IMR-90 (cell line): ENCODE measurements at regions of chr12 and their contacts with region 1.

Region 1: DNA sequence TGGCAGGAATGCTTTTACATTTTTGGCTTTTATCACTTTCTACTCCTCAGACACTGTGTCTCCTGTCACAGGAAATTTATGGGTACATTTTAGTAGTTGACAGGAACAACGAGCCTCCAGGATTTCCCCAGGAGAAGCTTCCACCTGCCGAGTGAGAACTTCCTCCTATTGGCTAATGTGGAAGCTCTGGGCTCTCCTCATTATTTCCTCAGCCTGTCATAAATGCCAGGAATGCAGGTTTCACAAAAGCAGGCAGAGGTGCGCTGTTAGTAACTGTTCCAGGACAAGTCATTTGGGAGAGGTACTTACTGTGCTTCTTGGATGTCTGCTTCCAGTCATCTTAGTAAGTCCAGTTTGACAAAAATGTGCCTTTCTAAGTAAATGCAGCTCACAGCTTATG is 19.1 kb upstream of the DCP1B start:
- DNase-seq: no peak
- ATAC-seq: no peak
- H3K4me3 ChIP-seq: no peak overlapping the region
- H3K27ac ChIP-seq: no peak overlapping the region
- H3K4me1 ChIP-seq: no peaks in the 10 kb centered on the region
- H3K27me3 ChIP-seq: peaks cover 38% of the 10 kb centered on the region
- CTCF ChIP-seq: no peak
- POLR2A ChIP-seq: no peak
- RAD21 ChIP-seq: no peak

Region 2: DNA sequence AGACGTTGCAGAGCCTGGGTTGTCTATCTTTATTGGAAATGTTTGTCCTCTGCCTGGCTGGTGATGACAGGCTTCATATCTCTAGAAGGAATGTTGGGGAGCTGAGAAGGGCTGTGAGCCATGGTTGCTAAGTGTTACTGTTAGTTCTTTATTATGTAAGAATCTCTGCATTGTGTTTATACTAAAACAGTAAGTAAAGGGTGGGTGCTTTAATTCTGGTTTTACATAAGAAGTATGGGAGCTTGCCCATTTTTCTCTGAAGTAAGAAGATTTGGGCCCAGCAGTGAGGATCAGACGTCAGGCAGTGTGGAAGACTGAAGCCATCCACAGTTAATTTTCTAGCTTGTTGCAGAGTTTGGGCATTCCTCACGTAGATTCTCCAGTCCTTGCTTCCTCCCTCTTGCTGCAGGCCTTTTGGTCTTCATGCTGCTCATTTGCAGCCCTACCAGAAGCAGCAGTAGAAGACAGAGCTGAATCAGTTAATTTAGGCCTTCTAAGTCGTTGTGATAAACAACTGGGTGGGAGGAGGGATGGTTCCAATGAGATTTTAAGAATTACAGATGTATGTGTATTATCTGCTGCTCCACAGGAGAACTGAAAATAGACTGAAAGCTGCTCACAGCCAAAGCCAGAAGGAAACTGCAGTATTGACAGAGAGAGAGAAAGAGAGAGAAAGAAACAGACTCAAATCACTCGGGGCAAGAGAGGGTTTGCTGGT is 372.9 kb before region 1 on chr12:
- CTCF ChIA-PET with region 1: no interaction called
- POLR2A ChIA-PET with region 1: no interaction called
- dilution Hi-C with region 1: no loop called
- in situ Hi-C with region 1: loop called (anchors 10 kb)
- intact Hi-C with region 1: no loop called
- DNase-seq: peak; percentile 20
- ATAC-seq: peak; percentile 45; the same call in 1 of the 2 replicates
- H3K4me3 ChIP-seq: no peak overlapping the region
- H3K27ac ChIP-seq: no peak overlapping the region
- H3K4me1 ChIP-seq: peaks cover 4% of the 10 kb centered on the region
- H3K27me3 ChIP-seq: no peaks in the 10 kb centered on the region
- CTCF ChIP-seq: no peak
- POLR2A ChIP-seq: no peak
- RAD21 ChIP-seq: no peak

Region 3: GRCh38 chr12:1804545-1805332 is 218.6 kb before region 1 on chr12:
- CTCF ChIA-PET with region 1: no interaction called
- POLR2A ChIA-PET with region 1: no interaction called
- dilution Hi-C with region 1: no loop called
- in situ Hi-C with region 1: loop called (anchors 10 kb)
- intact Hi-C with region 1: no loop called
- DNase-seq: peak; percentile 88
- ATAC-seq: peak; percentile 90
- H3K4me3 ChIP-seq: no peak overlapping the region
- H3K27ac ChIP-seq: peak overlapping the region; percentile 12; the same call in 1 of the 2 replicates
- H3K4me1 ChIP-seq: no peaks in the 10 kb centered on the region
- H3K27me3 ChIP-seq: no peaks in the 10 kb centered on the region
- CTCF ChIP-seq: no peak
- POLR2A ChIP-seq: no peak
- RAD21 ChIP-seq: no peak

Region 4: DNA sequence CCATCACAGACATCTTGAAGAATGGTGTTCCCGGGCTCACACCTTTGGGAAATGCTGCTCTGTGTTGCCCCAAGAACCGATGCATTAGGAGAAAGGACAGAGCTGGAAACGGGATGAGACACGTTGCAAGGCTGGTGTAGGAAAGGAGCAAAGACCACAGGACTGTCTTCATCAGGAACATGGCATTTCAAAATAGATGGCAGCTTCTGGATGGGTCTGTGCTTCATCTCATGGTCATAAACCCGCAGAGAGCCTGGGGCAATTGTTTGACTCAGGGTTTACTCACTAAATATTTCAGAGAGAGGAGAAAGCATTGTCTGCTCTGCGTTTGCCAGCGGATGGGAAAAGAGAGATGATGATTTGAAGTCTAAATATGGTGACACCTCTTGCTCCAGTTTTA is 105.7 kb after region 1 on chr12:
- CTCF ChIA-PET with region 1: no interaction called
- POLR2A ChIA-PET with region 1: no interaction called
- dilution Hi-C with region 1: no loop called
- in situ Hi-C with region 1: no loop called
- intact Hi-C with region 1: no loop called
- DNase-seq: peak; percentile 75
- ATAC-seq: peak; percentile 63
- H3K4me3 ChIP-seq: no peak overlapping the region
- H3K27ac ChIP-seq: no peak overlapping the region
- H3K4me1 ChIP-seq: peaks cover 10% of the 10 kb centered on the region
- H3K27me3 ChIP-seq: no peaks in the 10 kb centered on the region
- CTCF ChIP-seq: no peak
- POLR2A ChIP-seq: no peak
- RAD21 ChIP-seq: no peak